Activated naive CD4-positive, alpha-beta T cell treated with anti-CD3 and anti-CD28 coated beads for 36 hours (primary cell): ENCODE measurements at regions of chr1 and their contacts with region 1.

Region 1: DNA sequence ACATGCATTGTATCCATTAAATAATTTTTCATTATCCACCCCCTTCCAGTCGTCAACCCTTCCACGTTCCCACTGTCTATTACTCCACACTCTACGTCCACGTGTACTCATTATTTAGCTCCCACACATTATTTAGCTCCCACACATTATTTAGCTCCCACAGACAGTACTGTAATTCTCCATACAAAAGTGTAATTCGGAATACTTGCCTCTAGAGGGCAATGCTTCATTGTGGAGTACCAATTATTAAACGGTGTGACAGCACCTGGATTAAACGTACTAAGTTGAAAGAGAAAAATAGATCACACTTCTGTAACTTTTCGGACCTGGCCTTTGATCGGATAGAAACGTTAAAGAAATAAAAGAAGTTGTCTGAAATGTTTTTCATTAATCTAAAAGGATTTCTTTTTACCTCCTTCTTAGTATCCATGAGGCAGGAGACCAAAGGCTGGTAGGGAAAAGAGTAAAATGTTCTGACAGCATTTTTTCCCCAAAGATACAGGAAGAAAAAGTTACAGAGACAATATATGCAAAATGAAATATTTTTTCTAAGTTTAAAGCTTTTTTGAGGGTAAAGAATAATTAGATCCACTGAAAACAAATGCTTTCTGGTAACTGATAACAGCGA is 99.2 kb downstream of the LHX8 start:
- DNase-seq: no peak
- H3K4me3 Mint-ChIP-seq: no peak overlapping the region
- H3K27ac Mint-ChIP-seq: no peak overlapping the region
- H3K4me1 Mint-ChIP-seq: no peaks in the 10 kb centered on the region
- H3K27me3 Mint-ChIP-seq: no peaks in the 10 kb centered on the region

Region 2: GRCh38 chr1:75373533-75374320 is 140.3 kb after region 1 on chr1:
- CTCF ChIA-PET with region 1: no interaction called
- intact Hi-C with region 1: no loop called
- DNase-seq: no peak
- H3K4me3 Mint-ChIP-seq: no peak overlapping the region
- H3K27ac Mint-ChIP-seq: no peak overlapping the region
- H3K4me1 Mint-ChIP-seq: no peaks in the 10 kb centered on the region
- H3K27me3 Mint-ChIP-seq: no peaks in the 10 kb centered on the region

Region 3: DNA sequence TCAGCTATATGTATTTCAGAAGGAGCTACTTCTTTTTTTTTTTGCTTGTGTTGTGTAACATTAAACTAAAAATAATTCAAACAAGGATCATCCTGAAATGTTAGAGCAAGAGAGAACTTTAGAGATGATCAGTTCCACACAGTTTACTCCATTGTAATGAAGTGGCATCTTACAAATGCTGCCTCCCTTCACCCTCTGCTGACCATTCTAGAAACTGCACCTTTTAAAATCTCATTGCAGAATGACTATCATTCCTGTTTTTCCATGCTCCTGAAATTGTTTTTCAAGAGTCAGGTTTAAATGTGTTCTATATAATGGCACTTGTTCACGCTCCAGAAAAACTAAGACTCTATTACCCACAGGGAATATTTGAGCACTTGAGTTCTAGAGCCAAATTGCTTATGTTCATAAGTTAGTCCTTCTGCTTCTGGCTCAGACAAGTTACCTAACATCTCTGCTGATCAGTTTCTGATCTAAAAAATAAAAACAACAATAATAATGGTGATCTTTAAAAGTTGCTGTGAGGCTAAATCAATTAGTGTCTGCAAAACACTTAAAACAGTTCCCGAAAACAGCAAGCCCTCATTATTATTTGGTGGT is 399.0 kb after region 1 on chr1:
- CTCF ChIA-PET with region 1: interaction called, 4 read pairs
- intact Hi-C with region 1: loop called (anchors 1 kb)
- DNase-seq: no peak
- H3K4me3 Mint-ChIP-seq: no peak overlapping the region
- H3K27ac Mint-ChIP-seq: no peak overlapping the region
- H3K4me1 Mint-ChIP-seq: no peaks in the 10 kb centered on the region
- H3K27me3 Mint-ChIP-seq: peaks cover 16% of the 10 kb centered on the region